A673 (cell line): ENCODE measurements at regions of chr17 and their contacts with region 1.

Region 1: DNA sequence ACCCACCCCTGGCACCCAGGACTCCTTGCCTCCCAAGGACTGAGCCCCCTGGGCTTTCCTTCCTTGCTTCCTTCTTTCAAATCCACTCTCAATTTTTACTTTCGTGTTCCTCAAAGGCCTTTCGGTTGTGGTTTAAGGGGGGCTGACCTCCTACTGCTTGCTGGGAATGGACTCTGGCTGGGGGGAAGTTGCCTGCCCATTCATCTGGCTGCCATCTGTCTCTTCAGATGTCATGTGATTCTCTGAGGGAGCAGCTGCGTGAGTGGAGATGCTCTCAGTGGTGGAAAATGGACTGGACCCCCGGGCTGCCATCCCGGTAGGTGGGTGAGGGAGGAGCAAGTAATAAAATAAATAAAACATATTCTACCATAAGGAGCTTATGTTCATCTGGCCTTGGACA is 93.8 kb upstream of the RPRML start:
- DNase-seq: no peak
- H3K4me3 ChIP-seq: no peak overlapping the region
- H3K27ac ChIP-seq: no peak overlapping the region
- H3K4me1 ChIP-seq: no peaks in the 10 kb centered on the region
- H3K27me3 ChIP-seq: no peaks in the 10 kb centered on the region
- CTCF ChIP-seq: no peak

Region 2: DNA sequence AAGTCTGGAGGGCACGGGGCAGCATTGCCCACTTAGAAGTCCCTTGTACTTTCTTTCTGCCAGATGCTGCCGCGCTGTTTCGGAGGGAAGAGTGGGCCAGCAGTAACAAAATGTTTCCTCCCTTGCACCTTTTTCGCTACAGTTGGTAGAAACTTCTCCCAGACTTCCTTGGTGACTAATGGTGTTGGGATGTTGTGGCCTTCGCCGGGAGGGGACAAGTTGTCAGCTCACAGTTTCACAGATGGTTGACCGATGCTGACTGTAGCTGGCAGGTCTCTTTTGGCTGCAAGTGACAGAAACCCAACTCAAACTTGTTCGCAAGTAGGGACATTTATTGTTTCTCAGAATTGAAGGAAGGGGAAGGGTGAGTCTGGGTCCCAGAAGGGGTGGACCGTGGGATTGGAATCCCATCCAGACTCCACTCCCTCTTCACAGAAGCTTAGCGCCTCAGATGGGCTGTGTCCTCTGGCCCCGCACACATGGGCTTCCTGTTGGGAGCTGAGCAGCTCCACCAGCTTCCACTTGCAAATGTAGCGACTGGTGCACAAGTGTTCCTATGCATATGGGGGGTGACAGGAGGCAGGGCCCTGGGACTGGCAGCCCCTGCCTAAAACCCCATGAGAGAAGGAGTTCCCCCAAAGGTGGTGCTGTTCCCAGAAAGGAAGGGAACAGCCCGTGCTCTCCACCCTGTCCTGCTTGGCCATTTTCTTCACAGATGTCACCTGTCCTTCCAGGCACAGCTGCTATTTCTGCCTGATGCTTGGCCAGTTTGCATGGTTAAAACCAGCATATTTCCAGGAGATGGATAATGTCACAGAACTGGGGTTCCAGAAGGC is 62.9 kb before region 1 on chr17:
- CTCF ChIA-PET with region 1: no interaction called
- POLR2A ChIA-PET with region 1: no interaction called
- intact Hi-C with region 1: loop called (anchors 10 kb)
- DNase-seq: no peak
- H3K4me3 ChIP-seq: no peak overlapping the region
- H3K27ac ChIP-seq: no peak overlapping the region
- H3K4me1 ChIP-seq: no peaks in the 10 kb centered on the region
- H3K27me3 ChIP-seq: no peaks in the 10 kb centered on the region
- CTCF ChIP-seq: no peak

Region 3: GRCh38 chr17:47315451-47316266 is 242.8 kb after region 1 on chr17:
- CTCF ChIA-PET with region 1: no interaction called
- POLR2A ChIA-PET with region 1: no interaction called
- intact Hi-C with region 1: no loop called
- DNase-seq: peak; percentile 67
- H3K4me3 ChIP-seq: no peak overlapping the region
- H3K27ac ChIP-seq: no peak overlapping the region
- H3K4me1 ChIP-seq: no peaks in the 10 kb centered on the region
- H3K27me3 ChIP-seq: no peaks in the 10 kb centered on the region
- CTCF ChIP-seq: peak; percentile 73